GM18951 (cell line): ENCODE measurements at regions of chr14 and their contacts with region 1.

Region 1: DNA sequence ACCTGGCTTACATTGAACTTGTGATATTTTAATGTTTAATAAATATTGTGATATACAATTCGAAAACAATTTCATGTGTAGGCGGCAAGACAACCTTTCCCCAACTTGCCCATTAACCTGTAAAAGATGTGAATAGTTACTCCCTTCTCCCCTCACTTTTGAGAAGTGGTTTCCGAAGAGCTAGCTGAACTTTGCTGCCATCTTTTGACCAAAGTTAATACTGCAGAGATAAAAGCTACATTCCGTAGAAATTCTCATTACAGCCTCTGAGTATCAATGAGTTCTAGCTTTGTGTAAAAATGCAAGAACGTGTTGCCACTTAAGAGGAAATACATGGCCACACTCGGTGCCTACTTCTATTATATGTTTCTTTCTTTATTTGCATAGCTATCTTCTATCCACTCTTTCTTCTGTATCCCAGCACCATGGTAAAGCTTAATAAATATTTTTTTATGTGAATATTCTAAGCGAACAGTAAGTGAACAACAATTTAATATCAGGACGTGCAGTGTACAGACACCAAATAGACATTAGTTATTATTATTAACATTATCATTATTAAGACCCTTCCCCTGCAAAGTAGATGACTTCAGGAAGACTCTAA is 105.1 kb upstream of the TMEM260 start:
- POLR2A ChIP-seq: no peak

Region 2: GRCh38 chr14:55446218-55446654 is 1028.3 kb before region 1 on chr14:
- in situ Hi-C with region 1: loop called (anchors 25 kb)
- POLR2A ChIP-seq: no peak

Region 3: GRCh38 chr14:56100556-56100955 is 374.0 kb before region 1 on chr14:
- in situ Hi-C with region 1: no loop called
- POLR2A ChIP-seq: no peak

Region 4: GRCh38 chr14:56555921-56556570 is 81.5 kb after region 1 on chr14:
- in situ Hi-C with region 1: no loop called
- POLR2A ChIP-seq: no peak